ENCODE measurements at regions of chr10 and their contacts with region 1.

Region 1: GRCh38 chr10:359083-359482 is 223.8 kb downstream of the ZMYND11 start:
- DNase-seq: no peak
- ATAC-seq: no peak
- H3K4me3 Mint-ChIP-seq: no peak overlapping the region
- H3K27ac Mint-ChIP-seq: no peak overlapping the region
- H3K4me1 Mint-ChIP-seq: peaks cover 3% of the 10 kb centered on the region
- H3K27me3 Mint-ChIP-seq: peaks cover 4% of the 10 kb centered on the region
- CTCF ChIP-seq: no peak

Region 2: GRCh38 chr10:178208-178607 is 180.9 kb before region 1 on chr10:
- CTCF ChIA-PET with region 1: no interaction called
- POLR2A ChIA-PET with region 1: interaction called, 4 read pairs
- intact Hi-C with region 1: loop called (anchors 1 kb)
- DNase-seq: no peak
- ATAC-seq: no peak
- H3K4me3 Mint-ChIP-seq: no peak overlapping the region
- H3K27ac Mint-ChIP-seq: no peak overlapping the region
- H3K4me1 Mint-ChIP-seq: peaks cover 6% of the 10 kb centered on the region
- H3K27me3 Mint-ChIP-seq: no peaks in the 10 kb centered on the region
- CTCF ChIP-seq: no peak

Region 3: GRCh38 chr10:718152-718700 is 359.1 kb after region 1 on chr10:
- CTCF ChIA-PET with region 1: no interaction called
- POLR2A ChIA-PET with region 1: no interaction called
- intact Hi-C with region 1: no loop called
- DNase-seq: no peak
- ATAC-seq: no peak
- H3K4me3 Mint-ChIP-seq: no peak overlapping the region
- H3K27ac Mint-ChIP-seq: no peak overlapping the region
- H3K4me1 Mint-ChIP-seq: no peaks in the 10 kb centered on the region
- H3K27me3 Mint-ChIP-seq: peaks cover 10% of the 10 kb centered on the region
- CTCF ChIP-seq: no peak

Measured in activated B cell treated with CpG ODN at 0.5 μM for 24 hours (primary cell).